ENCODE measurements at regions of chr5 and their contacts with region 1.

Region 1: GRCh38 chr5:142769741-142770631 is at the start of gene ARHGAP26:
- DNase-seq: peak; percentile 97 to 99
- H3K4me3 ChIP-seq: peak within 1 kb of the TSS; percentile 70 to 71
- H3K27ac ChIP-seq: peak within 1 kb of the TSS; percentile 77 to 84
- H3K4me1 ChIP-seq: peaks cover 0 to 26% (median 16%) of the 10 kb centered on the region in 4 donors
- H3K27me3 ChIP-seq: no peaks in the 10 kb centered on the region
- CTCF ChIP-seq: peak; percentile 11 to 31

Region 2: DNA sequence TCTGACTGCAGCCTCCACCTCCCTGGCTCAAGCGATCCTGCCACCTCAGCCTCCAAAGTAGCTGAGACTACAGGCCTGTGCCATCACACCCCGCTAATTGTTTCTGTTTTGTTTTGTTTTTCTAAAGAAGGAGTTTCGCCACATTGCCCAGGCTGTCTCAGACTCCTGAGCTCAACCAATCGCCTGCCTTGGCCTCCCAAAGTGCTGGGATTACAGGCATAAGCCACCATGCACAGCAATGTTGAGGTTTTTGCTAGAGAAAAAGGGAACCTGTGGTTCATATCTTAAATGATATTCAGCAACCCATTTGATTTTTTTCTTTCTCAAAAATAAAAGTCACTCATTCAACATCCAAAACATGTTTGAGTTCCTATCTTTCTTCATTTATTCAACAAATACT is 866.7 kb before region 1 on chr5:
- intact Hi-C with region 1: no loop called
- DNase-seq: no peak
- H3K4me3 ChIP-seq: no peak overlapping the region
- H3K27ac ChIP-seq: no peak overlapping the region
- H3K4me1 ChIP-seq: no peaks in the 10 kb centered on the region
- H3K27me3 ChIP-seq: peaks cover 0 to 5% of the 10 kb centered on the region in 2 donors
- CTCF ChIP-seq: no peak

Region 3: DNA sequence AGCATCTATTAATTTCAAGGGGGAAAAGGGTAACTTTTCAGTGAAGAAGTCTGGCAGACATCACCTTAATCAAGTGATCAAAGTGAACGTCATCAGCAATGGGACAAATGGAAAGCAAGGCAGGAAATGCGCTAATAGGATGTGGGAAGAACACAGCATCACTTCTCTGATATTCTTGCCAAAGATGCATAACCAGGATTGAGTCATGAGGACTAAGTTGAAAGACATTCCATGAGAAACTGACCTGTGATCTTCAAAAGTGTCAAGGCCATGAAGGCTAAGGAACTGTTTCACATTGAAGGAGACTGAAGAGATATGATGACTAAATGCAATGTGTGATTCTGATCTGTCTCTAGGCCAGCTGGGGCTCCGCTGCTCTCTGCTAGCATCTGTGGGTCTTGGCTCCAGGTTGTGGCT is 568.5 kb before region 1 on chr5:
- intact Hi-C with region 1: no loop called
- DNase-seq: no peak
- H3K4me3 ChIP-seq: no peak overlapping the region
- H3K27ac ChIP-seq: no peak overlapping the region
- H3K4me1 ChIP-seq: no peaks in the 10 kb centered on the region
- H3K27me3 ChIP-seq: no peaks in the 10 kb centered on the region
- CTCF ChIP-seq: no peak

Region 4: DNA sequence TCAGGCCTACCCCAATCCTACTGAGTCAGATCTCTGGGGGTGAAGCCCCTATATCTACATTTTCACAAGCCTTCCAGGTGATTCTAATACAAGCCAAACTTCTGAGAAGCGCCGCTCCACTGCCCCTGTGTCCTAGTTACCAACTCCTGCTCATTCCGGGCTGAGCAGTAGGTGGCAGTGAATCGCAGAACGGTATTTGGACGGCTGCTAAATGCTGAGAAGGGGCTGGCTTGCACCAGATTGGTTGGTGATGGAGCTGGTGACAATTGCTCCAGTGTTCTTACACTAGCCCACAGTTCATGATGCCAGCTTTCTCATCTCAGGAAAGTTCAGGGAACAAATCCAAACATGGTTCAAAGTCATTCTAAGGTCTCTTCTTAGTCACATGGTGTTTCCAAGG is 53.0 kb before region 1 on chr5:
- intact Hi-C with region 1: loop called (anchors 5 kb)
- DNase-seq: peak; percentile 41 to 73
- H3K4me3 ChIP-seq: no peak overlapping the region
- H3K27ac ChIP-seq: peak overlapping the region in 1 of 2 donors; percentile 15
- H3K4me1 ChIP-seq: peaks cover 0 to 15% (median 9%) of the 10 kb centered on the region in 4 donors
- H3K27me3 ChIP-seq: no peaks in the 10 kb centered on the region
- CTCF ChIP-seq: peak; percentile 40 to 43

Region 5: DNA sequence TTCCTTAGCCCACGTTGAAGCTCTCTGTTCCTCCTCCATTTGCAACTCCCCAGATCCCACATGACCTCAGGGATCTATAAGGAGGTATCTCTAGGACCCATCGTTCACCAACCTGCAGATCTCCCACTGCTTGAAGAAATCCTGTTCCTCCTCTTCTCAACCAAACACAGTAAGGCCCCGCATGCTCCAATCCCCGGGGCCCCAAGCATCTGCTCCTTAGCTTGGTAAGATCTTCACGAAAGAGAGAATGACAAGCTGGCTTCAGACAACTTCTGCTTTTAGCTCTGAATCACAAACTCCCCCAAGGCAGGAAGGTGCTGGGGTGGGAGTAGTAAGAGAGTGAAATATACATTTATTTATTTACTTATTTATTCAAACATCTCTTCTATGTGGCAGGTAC is 32.8 kb before region 1 on chr5:
- intact Hi-C with region 1: no loop called
- DNase-seq: no peak
- H3K4me3 ChIP-seq: no peak overlapping the region
- H3K27ac ChIP-seq: no peak overlapping the region
- H3K4me1 ChIP-seq: no peaks in the 10 kb centered on the region
- H3K27me3 ChIP-seq: no peaks in the 10 kb centered on the region
- CTCF ChIP-seq: no peak

Region 6: GRCh38 chr5:142783601-142784341 is 13.8 kb after region 1 on chr5:
- intact Hi-C with region 1: no loop called
- DNase-seq: peak; percentile 51 to 64
- H3K4me3 ChIP-seq: no peak overlapping the region
- H3K27ac ChIP-seq: peak overlapping the region; percentile 3 to 20
- H3K4me1 ChIP-seq: peaks cover 0 to 29% (median 16%) of the 10 kb centered on the region in 4 donors
- H3K27me3 ChIP-seq: no peaks in the 10 kb centered on the region
- CTCF ChIP-seq: no peak

Region 7: DNA sequence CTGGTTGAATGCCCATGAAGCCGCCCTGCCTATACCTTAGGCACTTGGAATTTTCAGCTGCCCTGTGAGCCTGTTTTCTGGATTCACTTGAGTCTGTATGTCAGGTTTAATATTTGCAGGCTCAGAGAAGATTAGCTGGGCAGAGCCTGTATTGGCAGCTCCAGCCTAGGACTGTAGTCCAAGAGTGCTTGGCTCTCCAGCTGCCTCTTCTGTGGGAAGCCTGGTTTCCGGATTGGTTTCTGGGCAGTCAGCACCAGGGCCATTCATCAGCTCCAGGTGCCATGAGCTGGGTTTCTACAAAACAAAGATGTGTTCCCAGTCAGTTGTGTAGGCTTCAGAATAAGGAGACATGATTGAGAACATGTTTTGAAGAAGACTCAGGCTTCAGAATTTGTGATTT is 90.3 kb after region 1 on chr5:
- intact Hi-C with region 1: loop called (anchors 5 kb)
- DNase-seq: no peak
- H3K4me3 ChIP-seq: no peak overlapping the region
- H3K27ac ChIP-seq: no peak overlapping the region
- H3K4me1 ChIP-seq: peaks cover 0 to 23% (median 12%) of the 10 kb centered on the region in 4 donors
- H3K27me3 ChIP-seq: no peaks in the 10 kb centered on the region
- CTCF ChIP-seq: no peak

Measured in tibial artery (tissue), 4 donors.